Left cardiac atrium (tissue), 4 donors: ENCODE measurements at regions of chr15 and their contacts with region 1.

Region 1: DNA sequence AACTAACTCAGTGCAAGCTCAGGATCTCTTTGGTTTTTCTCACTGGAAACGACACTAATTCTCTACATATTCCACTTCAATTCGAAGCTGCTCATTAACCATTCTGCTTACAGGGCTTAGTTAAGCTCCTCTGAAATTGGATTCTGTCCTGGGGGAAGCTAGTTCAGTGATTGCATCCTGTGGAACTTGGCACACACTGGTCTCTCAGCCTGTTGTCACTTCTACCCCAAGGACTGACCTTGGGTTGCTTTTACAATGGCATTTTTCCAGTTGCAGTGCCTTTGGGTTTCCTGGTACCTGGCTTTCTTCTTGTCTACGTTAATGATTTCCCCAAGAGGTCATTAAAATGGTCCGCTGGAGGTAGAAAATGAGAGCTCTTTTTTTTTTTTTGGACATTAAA is 33.3 kb upstream of the GABRB3 start:
- DNase-seq: no peak
- ATAC-seq: peak; percentile 89

Region 2: DNA sequence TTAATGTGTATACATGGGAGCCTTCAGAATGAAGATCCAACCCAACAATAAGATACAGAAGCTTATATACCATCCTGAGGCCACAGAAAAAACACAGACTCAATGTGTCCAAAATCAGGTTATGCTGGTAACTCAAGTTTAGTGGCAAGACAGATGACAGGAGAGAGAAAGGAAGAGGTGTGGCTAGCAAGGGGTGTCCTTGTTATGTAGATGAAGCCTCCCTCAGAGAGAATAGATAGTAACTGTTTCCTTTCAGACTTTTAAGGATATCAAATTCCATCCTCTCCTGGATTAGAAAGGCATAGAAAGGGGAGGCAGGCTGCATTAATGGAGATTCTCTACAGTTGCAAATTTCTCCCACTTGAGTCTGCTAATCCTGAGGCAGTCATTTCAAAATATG is 480.6 kb before region 1 on chr15:
- intact Hi-C with region 1: no loop called
- DNase-seq: no peak
- ATAC-seq: no peak

Region 3: GRCh38 chr15:26590676-26591075 is 215.5 kb before region 1 on chr15:
- intact Hi-C with region 1: no loop called
- DNase-seq: no peak
- ATAC-seq: peak in 1 of 2 donors; percentile 23

Region 4: DNA sequence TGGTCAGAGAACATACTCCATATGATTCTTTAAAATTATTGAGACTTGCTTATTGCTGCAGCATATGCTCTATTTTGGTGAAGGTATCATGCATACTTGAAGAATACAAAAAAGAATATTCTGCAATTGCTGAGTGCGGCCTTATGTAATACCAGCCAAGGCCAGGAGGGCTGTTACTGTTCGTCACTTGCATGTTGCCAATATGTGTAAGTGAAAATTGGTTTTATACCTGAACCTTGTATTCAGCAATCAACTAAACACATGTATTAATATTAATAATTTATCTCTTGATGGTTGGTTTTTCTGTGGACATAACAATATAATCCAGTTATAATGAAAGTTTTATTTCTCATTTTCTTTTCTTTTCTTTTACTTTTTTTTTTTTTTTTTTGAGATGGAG is 46.8 kb after region 1 on chr15:
- intact Hi-C with region 1: loop called in 1 of 2 experiments (anchors 5 kb)
- DNase-seq: no peak
- ATAC-seq: no peak

Region 5: DNA sequence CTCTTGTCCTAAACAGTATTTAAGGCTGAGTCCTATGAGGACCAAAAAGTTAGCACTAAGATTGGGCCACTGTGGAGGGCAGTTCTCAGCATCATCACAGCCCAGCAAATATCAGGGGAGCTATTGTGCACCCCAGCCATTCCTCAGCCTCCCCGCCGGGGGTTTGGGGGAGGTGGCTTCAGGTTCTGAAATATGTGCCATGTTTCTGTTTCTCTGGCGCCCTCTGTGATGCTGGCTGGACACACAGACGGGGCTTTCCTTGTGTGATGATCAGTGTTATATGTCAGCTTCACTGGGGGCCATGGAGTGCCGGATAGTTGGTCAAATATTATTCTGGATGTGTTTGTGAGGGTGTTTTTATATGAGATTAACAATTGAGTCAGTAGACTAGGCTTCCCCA is 271.6 kb after region 1 on chr15:
- intact Hi-C with region 1: no loop called
- DNase-seq: no peak
- ATAC-seq: no peak